H1 (cell line): ENCODE measurements at regions of chr5 and their contacts with region 1.

Region 1: GRCh38 chr5:39714036-39714698 is 289.4 kb upstream of the DAB2 start:
- DNase-seq: no peak
- H3K4me3 ChIP-seq: no peak overlapping the region
- H3K27ac ChIP-seq: no peak overlapping the region
- H3K4me1 ChIP-seq: peaks cover 0 to 4% (median 1%) of the 10 kb centered on the region in 4 experiments; a peak in 2 of 7 replicates
- H3K27me3 ChIP-seq: no peaks in the 10 kb centered on the region
- CTCF ChIP-seq: peak in 2 of 3 experiments; percentile 48 to 55; a peak in 3 of 4 replicates
- EP300 ChIP-seq: no peak
- POLR2A ChIP-seq: no peak
- RAD21 ChIP-seq: peak; percentile 77 to 88

Region 2: DNA sequence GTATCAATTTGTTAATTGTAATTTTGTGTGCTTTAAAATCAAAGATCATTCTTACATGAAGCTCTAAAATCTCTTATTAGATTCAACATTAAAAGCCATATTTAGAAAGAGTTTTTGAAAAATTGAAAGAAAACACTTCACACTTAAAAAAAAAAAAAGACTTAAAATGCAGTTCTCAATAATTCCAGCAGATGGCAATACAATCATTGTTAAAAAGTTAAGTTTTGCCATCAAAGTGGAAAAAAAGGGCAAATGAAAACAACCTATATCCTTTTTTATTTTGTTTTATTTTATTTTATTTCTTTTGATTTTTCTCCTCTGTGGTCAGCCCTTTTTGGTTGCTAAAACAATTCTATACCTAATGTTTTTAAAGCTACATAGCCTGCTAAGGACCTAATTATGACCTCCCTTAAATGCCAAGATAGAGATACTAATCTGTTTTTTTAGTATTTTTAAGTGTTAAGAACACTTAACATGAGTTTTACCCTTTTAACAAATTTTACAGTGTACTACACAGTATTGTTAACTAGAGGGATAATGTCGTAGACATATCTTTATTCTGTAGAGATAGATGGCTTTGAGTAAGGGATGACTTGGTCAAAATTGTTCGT is 135.2 kb before region 1 on chr5:
- CTCF ChIA-PET with region 1: interaction called, 10 read pairs
- POLR2A ChIA-PET with region 1: no interaction called
- DNase-seq: no peak
- H3K4me3 ChIP-seq: no peak overlapping the region
- H3K27ac ChIP-seq: no peak overlapping the region
- H3K4me1 ChIP-seq: no peaks in the 10 kb centered on the region
- H3K27me3 ChIP-seq: no peaks in the 10 kb centered on the region
- CTCF ChIP-seq: peak in 1 of 3 experiments; percentile 21; a peak in 2 of 4 replicates
- EP300 ChIP-seq: no peak
- POLR2A ChIP-seq: no peak
- RAD21 ChIP-seq: peak in 1 of 2 experiments; percentile 56; a peak in 3 of 4 replicates

Region 3: DNA sequence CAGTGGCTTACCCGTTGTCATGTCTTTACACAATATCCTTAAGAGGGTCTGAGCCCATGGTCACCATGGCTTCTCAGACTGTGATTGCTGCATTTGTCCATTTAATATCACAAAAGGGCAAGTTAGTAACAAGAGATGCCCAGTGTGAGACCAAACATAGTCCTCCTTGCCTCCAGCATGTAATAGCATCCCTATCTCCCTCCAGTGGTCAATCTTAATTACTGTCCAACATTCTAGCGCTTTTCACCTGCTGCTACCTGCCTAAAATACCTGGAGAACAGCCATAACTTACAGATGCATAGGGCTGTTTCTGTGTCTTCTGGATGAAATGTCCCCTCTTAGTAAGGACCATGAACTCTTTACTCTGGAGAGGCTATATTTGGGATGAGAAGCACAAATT is 22.2 kb before region 1 on chr5:
- CTCF ChIA-PET with region 1: interaction called, 15 read pairs
- POLR2A ChIA-PET with region 1: no interaction called
- DNase-seq: no peak
- H3K4me3 ChIP-seq: no peak overlapping the region
- H3K27ac ChIP-seq: no peak overlapping the region
- H3K4me1 ChIP-seq: no peaks in the 10 kb centered on the region
- H3K27me3 ChIP-seq: no peaks in the 10 kb centered on the region
- CTCF ChIP-seq: peak in 2 of 3 experiments; percentile 38 to 59; a peak in 3 of 4 replicates
- EP300 ChIP-seq: no peak
- POLR2A ChIP-seq: no peak
- RAD21 ChIP-seq: peak; percentile 50 to 60

Region 4: GRCh38 chr5:39906146-39906545 is 192.0 kb after region 1 on chr5:
- CTCF ChIA-PET with region 1: no interaction called
- POLR2A ChIA-PET with region 1: no interaction called
- DNase-seq: no peak
- H3K4me3 ChIP-seq: no peak overlapping the region
- H3K27ac ChIP-seq: no peak overlapping the region
- H3K4me1 ChIP-seq: no peaks in the 10 kb centered on the region
- H3K27me3 ChIP-seq: no peaks in the 10 kb centered on the region
- CTCF ChIP-seq: no peak
- EP300 ChIP-seq: no peak
- POLR2A ChIP-seq: no peak
- RAD21 ChIP-seq: no peak

Region 5: DNA sequence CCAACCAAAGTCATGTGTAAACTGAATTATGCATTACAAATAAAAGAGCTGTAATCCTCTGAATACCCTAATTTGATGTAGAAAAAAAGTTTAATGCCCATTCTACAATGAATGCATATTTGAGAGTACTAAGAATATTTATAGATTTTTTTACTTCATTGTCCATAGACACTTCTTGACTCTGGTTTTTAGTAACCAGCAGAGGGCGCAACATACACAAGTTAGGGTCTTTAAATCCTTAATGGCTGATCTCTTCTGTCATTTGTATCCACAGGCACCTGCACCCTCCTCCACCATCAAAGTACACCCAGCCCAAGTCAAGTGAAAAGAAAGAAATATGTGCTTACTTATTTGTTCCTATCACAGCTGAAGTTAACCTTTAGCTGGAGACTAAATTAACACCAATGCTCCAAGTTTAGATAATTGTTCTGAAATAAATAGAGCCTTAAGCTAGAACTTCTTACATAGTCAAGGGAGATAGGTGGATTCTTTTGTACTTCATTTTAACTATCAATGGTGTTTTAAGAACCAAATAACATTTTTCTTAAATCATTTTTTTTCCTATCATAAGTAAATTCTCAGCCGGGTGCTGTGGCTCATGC is 234.8 kb after region 1 on chr5:
- CTCF ChIA-PET with region 1: interaction called, 13 read pairs
- POLR2A ChIA-PET with region 1: no interaction called
- DNase-seq: peak in 1 of 2 experiments; percentile 2
- H3K4me3 ChIP-seq: no peak overlapping the region
- H3K27ac ChIP-seq: no peak overlapping the region
- H3K4me1 ChIP-seq: no peaks in the 10 kb centered on the region
- H3K27me3 ChIP-seq: no peaks in the 10 kb centered on the region
- CTCF ChIP-seq: peak in 2 of 3 experiments; percentile 40 to 45; a peak in 2 of 4 replicates
- EP300 ChIP-seq: no peak
- POLR2A ChIP-seq: no peak
- RAD21 ChIP-seq: peak; percentile 81 to 85

Region 6: GRCh38 chr5:40688127-40688761 is 974.1 kb after region 1 on chr5:
- CTCF ChIA-PET with region 1: interaction called, 14 read pairs
- POLR2A ChIA-PET with region 1: no interaction called
- DNase-seq: peak in 1 of 2 experiments; percentile 86
- H3K4me3 ChIP-seq: no peak overlapping the region
- H3K27ac ChIP-seq: no peak overlapping the region
- H3K4me1 ChIP-seq: no peaks in the 10 kb centered on the region
- H3K27me3 ChIP-seq: peaks cover 0 to 3% (median 0%) of the 10 kb centered on the region in 4 experiments; a peak in 1 of 7 replicates
- CTCF ChIP-seq: peak; percentile 48 to 90 (median 89)
- EP300 ChIP-seq: no peak
- POLR2A ChIP-seq: no peak
- RAD21 ChIP-seq: peak; percentile 97 to 99

Region 7: DNA sequence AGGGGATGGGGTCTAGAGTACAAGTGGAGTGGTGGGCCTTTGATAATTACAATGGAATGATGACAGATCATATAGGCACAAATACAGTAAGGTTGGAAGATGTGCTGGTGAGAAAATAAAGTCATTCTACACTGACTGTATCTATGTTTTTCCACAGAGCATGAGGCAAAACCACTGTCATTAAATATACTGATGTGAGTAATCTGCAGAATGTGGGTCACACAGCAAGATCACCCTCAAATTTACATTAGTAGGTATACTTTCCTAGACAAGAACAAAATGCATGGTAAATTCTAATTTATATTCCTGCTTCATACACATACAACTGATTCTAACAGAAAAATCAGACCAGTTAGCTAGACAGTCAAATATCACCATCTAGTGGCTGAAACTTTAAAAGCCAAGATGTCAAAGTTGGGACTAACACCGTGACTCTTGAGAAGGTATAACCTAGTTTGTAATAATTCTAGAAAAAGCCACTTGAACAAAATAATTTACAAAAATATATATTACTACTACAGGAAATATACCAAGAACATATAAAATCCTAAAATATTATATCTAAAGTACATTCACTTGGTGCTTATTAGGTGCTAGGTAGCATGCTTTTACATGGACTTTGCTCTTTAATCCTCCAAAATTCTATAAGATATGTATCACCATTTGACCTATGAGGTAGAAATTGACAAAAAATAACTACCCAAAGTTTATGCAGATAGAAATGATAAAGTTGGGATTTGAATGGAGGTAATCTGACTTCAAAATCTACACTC is 1022.1 kb after region 1 on chr5:
- CTCF ChIA-PET with region 1: interaction called, 14 read pairs
- POLR2A ChIA-PET with region 1: no interaction called
- DNase-seq: no peak
- H3K4me3 ChIP-seq: no peak overlapping the region
- H3K27ac ChIP-seq: no peak overlapping the region
- H3K4me1 ChIP-seq: no peaks in the 10 kb centered on the region
- H3K27me3 ChIP-seq: no peaks in the 10 kb centered on the region
- CTCF ChIP-seq: peak in 2 of 3 experiments; percentile 36 to 49; a peak in 2 of 4 replicates
- EP300 ChIP-seq: no peak
- POLR2A ChIP-seq: no peak
- RAD21 ChIP-seq: peak; percentile 73 to 75